ENCODE measurements at regions of chr6 and their contacts with region 1.

Region 1: DNA sequence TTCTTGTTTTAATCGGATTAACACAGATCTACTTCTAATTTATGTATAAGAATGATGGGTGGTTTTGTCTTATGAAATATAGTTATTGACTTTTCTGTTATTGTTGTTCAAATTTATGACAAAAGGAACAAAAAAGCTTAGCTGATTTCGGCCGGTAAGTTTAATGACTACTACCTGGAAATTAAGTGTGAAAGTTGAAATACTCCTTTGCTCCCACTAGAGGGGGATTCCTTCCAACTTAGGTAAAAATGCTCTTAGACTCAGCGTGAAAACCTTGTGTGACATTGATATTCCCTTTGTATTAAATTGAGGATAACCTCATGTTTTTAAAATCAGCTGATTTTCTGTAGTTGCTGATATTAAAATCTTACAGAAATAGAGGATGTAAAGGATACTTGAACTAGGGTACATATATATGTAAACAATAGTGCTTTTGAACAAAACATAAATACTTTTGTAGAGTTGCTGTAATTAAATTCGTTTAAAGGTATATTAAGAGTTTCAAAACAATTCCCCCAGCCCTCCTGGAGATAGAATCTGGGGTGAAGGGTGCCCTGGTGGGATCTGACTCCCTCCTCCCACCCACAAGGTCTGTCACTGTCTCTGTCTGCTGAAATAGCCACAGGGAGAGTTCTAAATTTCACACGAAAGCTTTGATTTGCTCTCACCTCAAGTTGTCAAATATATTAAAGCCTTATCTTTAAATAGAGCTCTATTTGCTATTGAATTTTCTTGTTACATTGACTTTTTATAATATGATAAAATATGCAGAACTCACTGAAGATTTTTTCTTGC is 257.5 kb downstream of the ARID1B start:
- DNase-seq: no peak
- H3K4me3 Mint-ChIP-seq: peak overlapping the region; percentile 65
- H3K27ac Mint-ChIP-seq: peak overlapping the region; percentile 40
- H3K4me1 Mint-ChIP-seq: peaks cover 25% of the 10 kb centered on the region
- H3K27me3 Mint-ChIP-seq: no peaks in the 10 kb centered on the region

Region 2: GRCh38 chr6:157054531-157054979 is 19.9 kb after region 1 on chr6:
- intact Hi-C with region 1: loop called (anchors 1 kb)
- DNase-seq: peak; percentile 35
- H3K4me3 Mint-ChIP-seq: peak overlapping the region; percentile 53
- H3K27ac Mint-ChIP-seq: peak overlapping the region; percentile 95
- H3K4me1 Mint-ChIP-seq: peaks cover 33% of the 10 kb centered on the region
- H3K27me3 Mint-ChIP-seq: no peaks in the 10 kb centered on the region

Region 3: GRCh38 chr6:157099912-157100593 is 65.4 kb after region 1 on chr6:
- intact Hi-C with region 1: loop called (anchors 2 kb)
- DNase-seq: peak; percentile 58
- H3K4me3 Mint-ChIP-seq: peak overlapping the region; percentile 63
- H3K27ac Mint-ChIP-seq: peak overlapping the region; percentile 86
- H3K4me1 Mint-ChIP-seq: peaks cover 57% of the 10 kb centered on the region
- H3K27me3 Mint-ChIP-seq: no peaks in the 10 kb centered on the region

Region 4: DNA sequence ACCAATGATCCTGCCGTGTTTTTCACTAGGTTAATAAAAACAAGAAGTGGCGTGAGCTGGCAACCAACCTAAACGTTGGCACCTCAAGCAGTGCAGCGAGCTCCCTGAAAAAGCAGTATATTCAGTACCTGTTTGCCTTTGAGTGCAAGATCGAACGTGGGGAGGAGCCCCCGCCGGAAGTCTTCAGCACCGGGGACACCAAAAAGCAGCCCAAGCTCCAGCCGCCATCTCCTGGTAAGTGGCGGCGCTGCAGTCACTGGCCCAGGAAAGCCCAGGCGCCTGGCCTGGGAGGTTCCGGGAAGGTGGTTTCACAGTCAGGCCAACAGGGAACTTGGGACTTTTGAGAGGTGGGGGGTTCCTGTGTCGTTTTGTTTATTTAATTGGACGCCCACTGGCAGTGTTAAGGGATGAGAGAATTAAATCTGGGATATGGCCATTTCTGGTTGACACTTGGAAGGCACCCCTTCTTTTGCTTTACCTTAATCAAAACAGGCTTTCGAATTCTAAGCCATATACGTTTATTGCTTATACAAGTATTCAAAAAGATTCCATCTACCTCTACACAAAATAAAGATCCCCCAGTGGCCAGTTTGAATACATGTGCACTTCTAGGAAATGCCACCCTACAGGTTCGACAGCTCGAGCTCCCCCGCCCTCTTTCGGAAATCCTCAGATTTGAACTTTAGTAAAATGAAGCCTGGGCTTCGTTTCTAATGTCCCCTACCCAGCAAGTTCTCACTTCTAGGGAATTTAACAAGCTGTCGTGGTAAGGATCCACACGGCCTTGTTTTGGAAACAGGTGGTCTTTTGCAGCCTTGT is 149.8 kb after region 1 on chr6:
- intact Hi-C with region 1: loop called (anchors 1 kb)
- DNase-seq: peak; percentile 37
- H3K4me3 Mint-ChIP-seq: no peak overlapping the region
- H3K27ac Mint-ChIP-seq: peak overlapping the region; percentile 64
- H3K4me1 Mint-ChIP-seq: peaks cover 25% of the 10 kb centered on the region
- H3K27me3 Mint-ChIP-seq: no peaks in the 10 kb centered on the region